ENCODE measurements at regions of chr20 and their contacts with region 1.

Region 1: GRCh38 chr20:3051385-3052019 is 5.7 kb downstream of the MRPS26 start:
- DNase-seq: no peak
- CTCF ChIP-seq: no peak

Region 2: DNA sequence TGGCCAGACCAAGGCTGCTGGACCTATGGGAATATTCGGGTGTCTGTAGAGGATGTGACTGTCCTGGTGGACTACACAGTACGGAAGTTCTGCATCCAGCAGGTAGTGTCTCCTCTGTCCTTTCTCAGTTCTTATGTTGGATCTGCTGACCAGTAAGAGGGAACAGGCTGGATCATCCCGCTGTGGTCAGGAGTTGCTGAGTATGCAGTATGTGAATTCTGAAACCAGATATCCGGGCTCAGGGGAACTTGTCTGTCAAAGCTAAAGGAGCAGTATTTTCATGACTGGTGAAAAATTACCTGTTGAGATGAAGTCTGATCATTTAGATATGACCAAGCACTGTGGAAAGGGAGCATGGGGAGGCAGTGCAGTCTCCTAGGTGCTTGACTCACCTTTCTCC is 30.2 kb before region 1 on chr20:
- CTCF ChIA-PET with region 1: no interaction called
- POLR2A ChIA-PET with region 1: no interaction called
- DNase-seq: no peak
- CTCF ChIP-seq: no peak

Region 3: DNA sequence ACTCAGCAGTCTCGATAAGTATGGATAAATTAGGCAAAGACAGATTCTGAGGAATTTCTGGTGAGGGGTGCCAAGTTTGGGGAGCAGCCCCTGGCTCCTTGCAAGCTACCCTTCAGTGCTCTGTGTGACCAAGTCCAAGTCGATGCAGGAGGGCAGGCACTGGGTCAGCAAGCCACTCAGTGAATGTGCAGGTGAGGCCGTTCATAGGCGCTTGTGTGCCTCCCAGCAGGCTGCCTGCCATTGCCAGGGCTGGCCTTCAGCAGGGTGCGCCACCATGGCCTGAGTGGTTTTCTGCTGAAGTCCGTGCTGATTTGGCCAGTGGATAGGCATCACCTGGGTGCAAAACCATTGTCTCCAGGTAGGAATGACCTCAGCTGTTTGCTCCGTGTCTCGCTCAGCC is 11.4 kb before region 1 on chr20:
- CTCF ChIA-PET with region 1: interaction called, 15 read pairs
- POLR2A ChIA-PET with region 1: no interaction called
- DNase-seq: no peak
- CTCF ChIP-seq: no peak

Region 4: GRCh38 chr20:3101737-3102574 is 50.5 kb after region 1 on chr20:
- CTCF ChIA-PET with region 1: interaction called, 11 read pairs
- POLR2A ChIA-PET with region 1: no interaction called
- DNase-seq: no peak
- CTCF ChIP-seq: no peak

Region 5: GRCh38 chr20:3115190-3116107 is 63.9 kb after region 1 on chr20:
- CTCF ChIA-PET with region 1: interaction called, 23 read pairs
- POLR2A ChIA-PET with region 1: no interaction called
- DNase-seq: peak; percentile 82
- CTCF ChIP-seq: peak; percentile 60

Region 6: GRCh38 chr20:3276680-3277015 is 225.1 kb after region 1 on chr20:
- CTCF ChIA-PET with region 1: interaction called, 21 read pairs
- POLR2A ChIA-PET with region 1: no interaction called
- DNase-seq: peak; percentile 42
- CTCF ChIP-seq: peak; percentile 34

Measured in GM10248 (cell line).